ENCODE measurements at regions of chr2 and their contacts with region 1.

Region 1: GRCh38 chr2:68441179-68441993 is 25.7 kb downstream of the FBXO48 start:
- DNase-seq: peak; percentile 46
- H3K4me3 ChIP-seq: no peak overlapping the region
- H3K27ac ChIP-seq: peak overlapping the region in 3 of 4 donors; percentile 40 to 65 (median 46)
- H3K4me1 ChIP-seq: peaks cover 6 to 35% (median 11%) of the 10 kb centered on the region in 3 donors
- H3K27me3 ChIP-seq: no peaks in the 10 kb centered on the region
- CTCF ChIP-seq: peak; percentile 89 to 95 (median 92)
- POLR2A ChIP-seq: no peak

Region 2: GRCh38 chr2:67585400-67585799 is 856.0 kb before region 1 on chr2:
- intact Hi-C with region 1: no loop called
- DNase-seq: no peak
- H3K4me3 ChIP-seq: no peak overlapping the region
- H3K27ac ChIP-seq: no peak overlapping the region
- H3K4me1 ChIP-seq: no peaks in the 10 kb centered on the region
- H3K27me3 ChIP-seq: no peaks in the 10 kb centered on the region
- CTCF ChIP-seq: no peak
- POLR2A ChIP-seq: no peak

Region 3: GRCh38 chr2:68121873-68122679 is 319.3 kb before region 1 on chr2:
- intact Hi-C with region 1: loop called (anchors 10 kb)
- DNase-seq: peak; percentile 17
- H3K4me3 ChIP-seq: no peak overlapping the region
- H3K27ac ChIP-seq: no peak overlapping the region
- H3K4me1 ChIP-seq: peaks cover 0 to 8% (median 0%) of the 10 kb centered on the region in 3 donors
- H3K27me3 ChIP-seq: no peaks in the 10 kb centered on the region
- CTCF ChIP-seq: peak; percentile 77 to 98 (median 95)
- POLR2A ChIP-seq: no peak

Region 4: GRCh38 chr2:68362069-68362468 is 79.3 kb before region 1 on chr2:
- intact Hi-C with region 1: loop called (anchors 5 kb)
- DNase-seq: peak; percentile 8
- H3K4me3 ChIP-seq: peak overlapping the region in 1 of 4 donors; percentile 49
- H3K27ac ChIP-seq: peak overlapping the region in 1 of 4 donors; percentile 13
- H3K4me1 ChIP-seq: peaks cover 0 to 18% (median 0%) of the 10 kb centered on the region in 3 donors
- H3K27me3 ChIP-seq: no peaks in the 10 kb centered on the region
- CTCF ChIP-seq: peak; percentile 55 to 86 (median 82)
- POLR2A ChIP-seq: no peak

Region 5: DNA sequence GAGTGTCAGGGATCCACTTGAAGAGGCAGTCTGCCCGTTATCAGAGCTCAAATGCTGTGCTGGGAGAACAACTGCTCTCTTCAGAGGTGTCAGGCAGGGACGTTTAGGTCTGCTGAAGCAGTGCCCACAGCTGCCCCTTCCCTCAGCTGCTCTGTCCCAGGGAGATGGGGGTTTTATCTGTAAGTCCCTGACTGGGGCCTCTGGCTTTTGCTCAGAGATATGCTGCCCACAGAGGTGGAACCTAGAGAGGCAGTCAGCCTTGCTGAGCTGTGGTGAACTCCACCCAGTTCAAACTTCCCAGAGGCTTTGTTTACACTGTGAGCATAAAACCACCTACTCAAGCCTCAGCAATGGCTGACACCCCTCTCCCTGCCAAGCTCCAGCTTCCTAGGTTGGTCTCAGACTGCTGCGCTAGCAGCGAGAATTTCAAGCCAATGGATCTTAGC is 38.2 kb before region 1 on chr2:
- intact Hi-C with region 1: no loop called
- DNase-seq: no peak
- H3K4me3 ChIP-seq: no peak overlapping the region
- H3K27ac ChIP-seq: no peak overlapping the region
- H3K4me1 ChIP-seq: peaks cover 0 to 5% (median 0%) of the 10 kb centered on the region in 3 donors
- H3K27me3 ChIP-seq: peaks cover 0 to 11% (median 0%) of the 10 kb centered on the region in 4 donors
- CTCF ChIP-seq: no peak
- POLR2A ChIP-seq: no peak

Measured in esophagus squamous epithelium (tissue), 5 donors.